Activated T-helper 1 cell treated with anti-CD3 and anti-CD28 coated beads, Interleukin-12 subunit alpha, Interleukin-12 subunit beta, Interleukin-2, Interleukin-4 antibody, amounts not matched to agents 30 ng/mL and 10 ng/mL and 1 ng/mL, durations not matched to agents 14 hours and 24 hours and 36 hours (primary cell): ENCODE measurements at regions of chr19 and their contacts with region 1.

Region 1: GRCh38 chr19:38849860-38850435 is at the start of gene HNRNPL:
- DNase-seq: peak; percentile 99
- H3K4me3 Mint-ChIP-seq: peak within 1 kb of the TSS; percentile 97
- H3K27ac Mint-ChIP-seq: peak within 1 kb of the TSS; percentile 99
- H3K4me1 Mint-ChIP-seq: peaks cover 50% of the 10 kb centered on the region
- H3K27me3 Mint-ChIP-seq: peaks cover 2% of the 10 kb centered on the region
- total RNA-seq, gene HNRNPL: 632 and 659 TPM in 2 replicates

Region 2: GRCh38 chr19:38315657-38316476 is 534.1 kb before region 1 on chr19 and contains the start of gene YIF1B:
- intact Hi-C with region 1: loop called (anchors 5 kb)
- DNase-seq: peak; percentile 94
- H3K4me3 Mint-ChIP-seq: peak within 1 kb of the TSS; percentile 85
- H3K27ac Mint-ChIP-seq: peak within 1 kb of the TSS; percentile 96
- H3K4me1 Mint-ChIP-seq: peaks cover 46% of the 10 kb centered on the region
- H3K27me3 Mint-ChIP-seq: no peaks in the 10 kb centered on the region
- total RNA-seq, gene YIF1B: 89.8 and 96.0 TPM in 2 replicates

Region 3: GRCh38 chr19:38402967-38403861 is 446.7 kb before region 1 on chr19 and contains the start of gene FAM98C:
- intact Hi-C with region 1: loop called (anchors 1 kb)
- DNase-seq: peak; percentile 98
- H3K4me3 Mint-ChIP-seq: peak within 1 kb of the TSS; percentile 89
- H3K27ac Mint-ChIP-seq: peak within 1 kb of the TSS; percentile 94
- H3K4me1 Mint-ChIP-seq: peaks cover 21% of the 10 kb centered on the region
- H3K27me3 Mint-ChIP-seq: no peaks in the 10 kb centered on the region
- total RNA-seq, gene FAM98C: 26.6 and 27.5 TPM in 2 replicates

Region 4: GRCh38 chr19:38647368-38647965 is 202.5 kb before region 1 on chr19 and contains the start of gene ACTN4:
- intact Hi-C with region 1: loop called (anchors 1 kb)
- DNase-seq: peak; percentile 100
- H3K4me3 Mint-ChIP-seq: peak within 1 kb of the TSS; percentile 94
- H3K27ac Mint-ChIP-seq: peak within 1 kb of the TSS; percentile 82
- H3K4me1 Mint-ChIP-seq: peaks cover 38% of the 10 kb centered on the region
- H3K27me3 Mint-ChIP-seq: no peaks in the 10 kb centered on the region
- total RNA-seq, gene ACTN4: 281 and 287 TPM in 2 replicates

Region 5: DNA sequence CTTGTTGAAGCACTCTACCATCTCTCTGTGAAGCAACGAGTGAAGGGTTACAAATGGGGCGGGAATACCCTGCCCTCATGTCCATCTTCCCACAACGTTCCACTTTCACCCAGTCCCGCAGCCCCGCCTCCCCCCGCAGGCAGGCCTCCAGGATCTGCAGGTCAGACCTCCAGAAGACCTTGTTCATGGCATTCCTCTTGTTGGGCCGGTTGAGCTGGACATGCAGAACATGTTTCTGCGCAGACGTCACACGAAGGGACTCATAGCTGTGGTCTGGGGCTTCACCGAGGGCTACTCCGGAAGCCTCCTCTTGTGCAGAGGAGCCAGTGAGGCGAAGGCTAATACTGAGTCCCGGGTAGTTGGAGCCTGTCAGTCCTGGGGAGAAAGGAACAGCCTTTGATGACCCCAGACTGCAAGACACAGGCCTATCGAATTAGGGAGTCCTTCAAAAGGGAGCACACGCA is 18.8 kb before region 1 on chr19:
- intact Hi-C with region 1: loop called (anchors 1 kb)
- DNase-seq: no peak
- H3K4me3 Mint-ChIP-seq: peak overlapping the region; percentile 89
- H3K27ac Mint-ChIP-seq: peak overlapping the region; percentile 95
- H3K4me1 Mint-ChIP-seq: peaks cover 22% of the 10 kb centered on the region
- H3K27me3 Mint-ChIP-seq: no peaks in the 10 kb centered on the region

Region 6: GRCh38 chr19:38929929-38930775 is 80.2 kb after region 1 on chr19 and contains the start of gene SARS2:
- intact Hi-C with region 1: loop called (anchors 1 kb)
- DNase-seq: peak; percentile 91
- H3K4me3 Mint-ChIP-seq: peak within 1 kb of the TSS; percentile 99
- H3K27ac Mint-ChIP-seq: peak within 1 kb of the TSS; percentile 97
- H3K4me1 Mint-ChIP-seq: peaks cover 28% of the 10 kb centered on the region
- H3K27me3 Mint-ChIP-seq: no peaks in the 10 kb centered on the region
- total RNA-seq, gene SARS2: 36.5 and 38.4 TPM in 2 replicates

Region 7: GRCh38 chr19:39264306-39265290 is 414.6 kb after region 1 on chr19:
- intact Hi-C with region 1: no loop called
- DNase-seq: no peak
- H3K4me3 Mint-ChIP-seq: no peak overlapping the region
- H3K27ac Mint-ChIP-seq: no peak overlapping the region
- H3K4me1 Mint-ChIP-seq: no peaks in the 10 kb centered on the region
- H3K27me3 Mint-ChIP-seq: peaks cover 37% of the 10 kb centered on the region